ENCODE measurements at regions of chr16 and their contacts with region 1.

Region 1: GRCh38 chr16:3282730-3283524 is at the start of gene ZNF263:
- DNase-seq: peak; percentile 96 to 97
- ATAC-seq: peak; percentile 96 to 98 (median 97)
- H3K4me3 ChIP-seq: peak within 1 kb of the TSS; percentile 76
- H3K27ac ChIP-seq: peak within 1 kb of the TSS; percentile 100
- H3K4me1 ChIP-seq: peaks cover 15% of the 10 kb centered on the region
- H3K27me3 ChIP-seq: no peaks in the 10 kb centered on the region
- CTCF ChIP-seq: no peak
- total RNA-seq, gene ZNF263: 11.0 to 17.8 (median 11.7) TPM

Region 2: GRCh38 chr16:3023669-3024478 is 259.1 kb before region 1 on chr16 and contains the starts of genes HCFC1R1 and THOC6:
- intact Hi-C with region 1: no loop called
- DNase-seq: peak; percentile 96 to 98
- ATAC-seq: peak; percentile 53 to 63 (median 58)
- H3K4me3 ChIP-seq: peak within 1 kb of the TSS; percentile 94
- H3K27ac ChIP-seq: peak within 1 kb of the TSS; percentile 100
- H3K4me1 ChIP-seq: peaks cover 29% of the 10 kb centered on the region
- H3K27me3 ChIP-seq: peaks cover 0 to 2% (median under 1%) of the 10 kb centered on the region in 3 donors
- CTCF ChIP-seq: no peak
- total RNA-seq, gene HCFC1R1: 65.1 to 258 (median 129) TPM
- total RNA-seq, gene THOC6: 17.0 to 34.4 (median 25.8) TPM

Region 3: DNA sequence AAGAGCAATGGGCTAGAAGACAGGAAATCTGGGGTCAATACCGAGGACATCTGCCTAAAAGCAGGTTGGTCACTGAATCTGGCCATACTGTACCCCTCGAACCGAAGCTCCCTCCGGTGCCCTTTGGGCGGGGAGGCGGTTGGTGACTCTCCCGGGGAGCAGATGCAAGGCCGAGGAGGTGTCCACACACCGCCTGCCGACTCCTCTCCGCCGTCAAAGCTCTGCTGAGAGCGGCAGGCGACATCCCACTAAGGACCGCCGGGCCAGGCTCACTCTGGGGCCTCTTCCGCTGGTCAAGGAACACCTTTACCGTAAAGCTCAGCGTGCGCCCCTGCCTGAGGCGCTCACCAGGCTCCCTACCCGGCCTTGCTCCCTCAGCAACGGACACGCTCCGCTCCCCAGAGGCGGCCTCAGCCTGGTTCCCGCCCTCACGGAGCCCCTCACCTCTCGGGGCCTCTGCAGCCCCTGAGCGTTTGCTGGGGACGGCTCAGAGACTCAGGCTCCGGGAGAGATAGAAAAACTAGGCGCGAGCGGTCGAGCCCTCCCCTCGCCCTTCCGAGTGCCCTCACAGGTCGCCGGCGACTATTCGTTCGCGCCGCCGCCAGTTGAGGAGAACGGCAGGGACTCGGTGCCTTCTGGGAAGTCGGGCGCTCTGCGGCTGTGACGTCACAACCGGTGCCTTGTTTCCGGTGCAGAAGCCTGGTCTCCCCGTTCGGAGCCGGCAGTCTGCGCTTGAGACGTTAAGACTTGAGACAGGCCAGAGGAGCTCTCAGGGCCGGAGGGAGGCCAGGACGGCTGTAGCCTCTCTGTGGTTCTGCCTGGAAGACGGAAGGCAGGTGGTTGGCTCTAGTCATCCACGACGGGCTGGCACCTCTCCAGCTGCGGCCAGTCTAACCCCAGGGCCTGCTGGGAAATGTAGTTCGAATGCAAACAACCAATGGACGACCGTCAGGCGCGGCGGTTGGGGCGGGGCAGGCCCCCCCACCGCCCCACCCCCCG is 48.1 kb before region 1 on chr16 and contains the start of gene ZNF200:
- intact Hi-C with region 1: loop called in 1 of 2 experiments (anchors 2 kb)
- DNase-seq: peak; percentile 97 to 98
- ATAC-seq: peak; percentile 99 to 100 (median 100)
- H3K4me3 ChIP-seq: peak within 1 kb of the TSS; percentile 97
- H3K27ac ChIP-seq: peak within 1 kb of the TSS; percentile 93
- H3K4me1 ChIP-seq: peaks cover 7% of the 10 kb centered on the region
- H3K27me3 ChIP-seq: no peaks in the 10 kb centered on the region
- CTCF ChIP-seq: no peak
- total RNA-seq, gene ZNF200: 2.8 to 4.0 (median 3.4) TPM

Region 4: DNA sequence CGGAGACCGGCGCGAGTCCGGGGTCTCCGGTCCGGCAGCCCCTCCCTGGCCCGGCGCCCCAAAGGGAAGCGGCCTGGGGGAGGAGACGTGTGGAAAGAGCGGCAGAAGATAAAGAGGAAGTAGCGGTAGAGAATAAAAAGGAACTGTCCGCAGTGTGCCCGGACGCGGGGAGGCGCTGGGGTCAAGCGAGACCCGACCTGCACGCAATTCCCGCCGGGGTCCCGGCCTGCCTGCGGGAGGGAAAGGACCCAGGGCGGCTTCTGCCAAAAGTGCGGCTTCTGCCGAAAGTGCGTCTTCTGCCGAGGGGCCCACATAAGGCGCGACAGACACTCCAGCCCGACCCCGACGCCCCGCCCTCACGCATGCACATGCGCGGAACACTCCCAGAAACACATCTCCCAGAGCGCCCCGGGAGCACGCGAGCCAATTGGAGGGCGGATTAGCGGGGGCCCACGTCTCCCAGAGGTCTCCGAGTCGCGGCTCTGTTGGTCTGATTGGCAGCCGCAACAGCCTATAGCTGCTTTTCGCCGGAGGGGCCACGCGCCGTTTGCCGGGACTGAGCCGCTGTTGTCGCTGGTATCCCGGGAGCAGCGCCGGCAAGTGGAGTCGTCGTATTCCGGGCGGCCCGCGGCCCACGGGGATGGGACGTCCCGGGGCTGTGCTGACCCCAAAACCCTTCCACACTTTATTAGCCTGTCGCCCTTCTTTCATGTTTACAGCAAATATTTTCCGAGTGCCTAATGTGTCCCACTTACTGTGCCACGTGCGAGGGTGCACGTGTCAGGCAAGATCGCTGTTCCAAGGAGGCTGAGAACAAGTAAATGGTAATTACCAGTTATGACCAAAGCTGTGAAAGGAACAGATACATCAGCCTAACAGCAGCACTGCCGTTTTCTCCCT is 18.5 kb before region 1 on chr16:
- intact Hi-C with region 1: loop called (anchors 1 to 2 kb)
- DNase-seq: peak; percentile 98
- ATAC-seq: peak; percentile 97 to 98 (median 97)
- H3K4me3 ChIP-seq: peak overlapping the region; percentile 80
- H3K27ac ChIP-seq: peak overlapping the region; percentile 95
- H3K4me1 ChIP-seq: peaks cover 3% of the 10 kb centered on the region
- H3K27me3 ChIP-seq: no peaks in the 10 kb centered on the region
- CTCF ChIP-seq: peak; percentile 5

Region 5: DNA sequence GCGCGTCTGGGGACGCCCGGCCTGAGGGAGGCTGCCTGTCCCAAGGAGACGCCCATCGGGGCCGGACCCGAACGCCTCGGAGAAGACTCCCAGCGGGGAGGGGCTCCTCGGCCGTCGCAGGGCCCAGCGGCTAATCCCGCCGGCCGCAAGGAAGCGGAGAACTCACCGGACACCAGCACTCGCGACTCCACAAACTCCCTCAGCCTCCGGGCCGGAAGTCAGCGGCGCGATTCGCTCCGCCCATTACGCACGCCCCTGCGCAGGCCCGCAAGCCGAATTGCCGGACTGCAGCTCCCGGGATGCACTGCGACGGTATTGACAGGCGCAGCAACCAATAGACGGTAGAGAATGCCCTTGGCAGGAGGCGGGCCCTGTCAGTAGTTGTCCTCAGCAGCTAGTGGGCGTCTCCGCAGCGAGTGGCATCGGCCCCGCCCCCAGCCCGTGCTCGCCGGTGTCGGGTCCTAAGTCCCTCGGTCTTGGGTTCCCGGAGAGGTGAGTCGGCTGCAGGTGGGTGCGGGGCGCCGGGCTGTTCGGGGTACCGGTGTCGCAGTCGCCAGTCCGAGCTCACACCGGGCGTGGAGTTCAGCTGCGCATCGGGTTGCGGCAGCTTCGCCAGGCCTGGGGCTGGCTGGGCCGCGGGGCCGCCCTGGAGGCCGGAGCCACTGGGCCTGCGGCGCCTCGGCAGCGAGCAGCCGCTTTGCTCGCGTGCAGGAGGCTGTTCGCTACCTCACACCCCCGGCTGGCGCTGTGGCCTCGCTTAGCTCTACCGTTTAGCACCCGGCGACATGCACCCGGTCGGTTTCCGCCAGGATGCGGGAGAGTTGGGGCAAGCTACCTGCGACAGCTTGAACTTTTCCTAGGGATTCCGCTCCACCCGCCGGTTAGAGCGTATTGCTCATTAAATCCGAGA is 118.1 kb after region 1 on chr16 and contains the starts of genes ZNF174 and ZSCAN32:
- intact Hi-C with region 1: no loop called
- DNase-seq: peak; percentile 99
- ATAC-seq: peak; percentile 99 to 100 (median 100)
- H3K4me3 ChIP-seq: peak within 1 kb of the TSS; percentile 98
- H3K27ac ChIP-seq: peak within 1 kb of the TSS; percentile 90
- H3K4me1 ChIP-seq: peaks cover 12% of the 10 kb centered on the region
- H3K27me3 ChIP-seq: no peaks in the 10 kb centered on the region
- CTCF ChIP-seq: no peak
- total RNA-seq, gene ZNF174: 6.2 to 8.4 (median 7.6) TPM
- total RNA-seq, gene ZSCAN32: 4.7 to 9.5 (median 6.2) TPM

Region 6: GRCh38 chr16:3503523-3503922 is 220.6 kb after region 1 on chr16:
- intact Hi-C with region 1: loop called in 1 of 2 experiments (anchors 5 kb)
- DNase-seq: no peak
- ATAC-seq: no peak
- H3K4me3 ChIP-seq: no peak overlapping the region
- H3K27ac ChIP-seq: no peak overlapping the region
- H3K4me1 ChIP-seq: peaks cover 7% of the 10 kb centered on the region
- H3K27me3 ChIP-seq: no peaks in the 10 kb centered on the region
- CTCF ChIP-seq: no peak